ENCODE measurements at regions of chr5 and their contacts with region 1.

Region 1: DNA sequence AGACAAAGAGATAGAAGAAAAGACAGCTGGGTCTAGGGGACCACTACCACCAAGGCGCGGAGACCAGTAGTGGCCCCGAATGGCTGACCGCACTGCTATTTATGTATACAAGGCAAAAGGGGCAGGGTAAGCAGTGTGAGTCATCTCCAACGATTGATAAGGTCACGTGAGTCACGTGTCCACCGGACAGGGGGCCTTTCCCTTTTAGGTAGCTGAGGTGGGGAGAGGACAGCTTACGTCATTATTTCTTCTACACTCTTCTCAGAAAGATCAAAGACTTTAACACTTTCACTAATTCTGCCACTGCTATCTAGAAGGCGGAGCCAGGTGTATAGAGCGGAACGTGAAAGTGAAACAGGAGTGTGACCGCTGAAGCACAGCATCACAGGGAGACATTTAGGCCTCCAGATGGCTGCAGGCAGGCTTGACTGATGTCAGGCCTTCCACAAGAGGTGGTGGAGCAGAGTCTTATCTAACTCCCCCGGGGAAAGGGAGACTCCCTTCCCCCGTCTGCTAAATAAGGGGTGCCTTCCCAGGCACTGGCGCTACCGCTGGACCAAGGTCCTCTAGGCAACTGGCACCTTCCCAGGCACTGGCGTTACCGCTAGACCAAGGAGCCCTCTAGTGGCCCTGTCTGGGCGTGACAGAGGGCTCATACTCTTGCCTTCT is 6.1 kb upstream of the PRR16 start:
- DNase-seq: peak; percentile 50 to 84
- H3K4me3 ChIP-seq: peak overlapping the region; percentile 21
- H3K4me1 ChIP-seq: peaks cover 19% of the 10 kb centered on the region
- H3K27me3 ChIP-seq: no peaks in the 10 kb centered on the region

Region 2: GRCh38 chr5:119452373-119453039 is 1005.5 kb before region 1 on chr5 and contains the start of gene HSD17B4:
- in situ Hi-C with region 1: loop called (anchors 25 kb)
- DNase-seq: peak; percentile 83 to 91
- H3K4me3 ChIP-seq: peak within 1 kb of the TSS; percentile 78
- H3K4me1 ChIP-seq: peaks cover 10% of the 10 kb centered on the region
- H3K27me3 ChIP-seq: no peaks in the 10 kb centered on the region